Ascending aorta (tissue), 2 donors: ENCODE measurements at regions of chr12 and their contacts with region 1.

Region 1: GRCh38 chr12:109462710-109463692 is 14.1 kb downstream of the KCTD10 start:
- DNase-seq: peak; percentile 60 to 95
- H3K4me3 ChIP-seq: peak overlapping the region; percentile 44 to 50
- H3K27ac ChIP-seq: peak overlapping the region; percentile 96 to 99
- H3K4me1 ChIP-seq: peaks cover 68 to 94% of the 10 kb centered on the region in 2 donors
- H3K27me3 ChIP-seq: no peaks in the 10 kb centered on the region
- CTCF ChIP-seq: no peak

Region 2: DNA sequence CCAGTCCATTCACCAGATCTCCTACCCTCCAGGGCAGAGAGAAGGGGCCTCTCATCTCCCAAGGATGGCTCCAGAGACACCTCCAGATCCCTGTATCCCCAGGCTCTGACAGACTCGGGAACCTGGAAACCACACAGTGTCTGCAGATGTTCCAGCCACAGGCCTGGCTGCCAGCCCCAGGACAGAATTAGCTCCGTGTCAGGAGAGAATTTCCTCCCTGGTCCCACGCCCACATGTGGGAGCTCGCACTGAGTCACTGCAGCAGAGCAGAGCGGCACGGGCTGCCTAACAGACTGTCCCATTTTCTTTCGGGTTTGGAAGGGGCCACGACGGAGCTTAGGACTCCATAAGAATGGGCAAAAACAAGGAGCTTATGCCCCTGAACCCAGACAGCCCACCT is 1157.5 kb before region 1 on chr12:
- intact Hi-C with region 1: loop called (anchors 10 kb)
- DNase-seq: peak; percentile 80 to 96
- H3K4me3 ChIP-seq: peak overlapping the region; percentile 39 to 48
- H3K27ac ChIP-seq: peak overlapping the region; percentile 90 to 91
- H3K4me1 ChIP-seq: peaks cover 31 to 64% of the 10 kb centered on the region in 2 donors
- H3K27me3 ChIP-seq: no peaks in the 10 kb centered on the region
- CTCF ChIP-seq: no peak

Region 3: DNA sequence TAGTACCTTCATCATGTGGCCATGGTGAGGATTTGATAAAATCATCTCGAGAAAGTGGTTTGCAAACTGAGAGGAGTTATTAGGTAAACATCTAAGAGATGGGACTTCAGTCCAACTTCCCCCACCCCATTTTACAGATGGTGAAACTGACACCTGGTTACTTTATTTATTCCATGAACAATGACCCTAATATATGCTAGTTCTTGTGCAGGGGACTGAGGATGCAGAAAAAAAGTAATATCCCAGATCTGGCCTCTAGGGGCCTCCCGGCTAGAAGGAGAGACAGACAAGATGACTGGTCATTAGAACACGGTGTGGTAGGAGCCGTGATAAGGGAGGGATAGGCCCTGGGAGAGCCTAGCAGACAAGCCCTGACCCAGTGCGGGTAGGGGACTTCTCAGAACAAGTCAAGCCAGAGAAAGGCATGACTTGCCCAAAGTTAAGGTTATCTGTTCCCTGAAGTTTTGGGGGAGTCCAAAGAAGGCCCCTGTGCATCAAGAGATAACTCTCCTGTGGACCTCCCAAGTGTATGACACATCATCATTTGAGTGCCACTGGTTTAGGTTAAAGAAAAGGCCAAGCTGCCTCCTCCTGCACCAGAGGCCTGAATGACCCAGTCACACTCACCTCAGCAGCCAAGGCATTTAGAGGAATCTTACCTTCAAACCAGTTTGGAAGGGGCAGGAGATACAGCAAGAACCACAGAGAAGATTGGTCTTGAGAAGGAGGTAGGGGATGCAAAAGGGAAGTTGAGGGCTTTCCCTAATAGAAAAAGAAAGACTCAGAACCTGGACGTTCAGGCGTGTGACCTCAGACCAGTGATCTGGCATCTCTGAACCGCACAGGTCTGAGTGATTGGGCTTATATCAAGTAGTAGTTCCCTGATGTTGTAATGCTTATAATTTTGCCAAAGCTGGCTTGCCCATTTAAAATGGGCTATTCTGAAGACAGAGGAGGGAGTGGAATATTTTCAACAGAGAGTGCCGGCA is 1125.5 kb before region 1 on chr12:
- intact Hi-C with region 1: loop called (anchors 10 kb)
- DNase-seq: peak in 1 of 2 donors; percentile 73
- H3K4me3 ChIP-seq: peak overlapping the region; percentile 48 to 59
- H3K27ac ChIP-seq: peak overlapping the region; percentile 88 to 96
- H3K4me1 ChIP-seq: peaks cover 21 to 63% of the 10 kb centered on the region in 2 donors
- H3K27me3 ChIP-seq: no peaks in the 10 kb centered on the region
- CTCF ChIP-seq: peak; percentile 44 to 61 (median 51)

Region 4: GRCh38 chr12:108838194-108839017 is 624.6 kb before region 1 on chr12:
- intact Hi-C with region 1: loop called (anchors 5 kb)
- DNase-seq: peak; percentile 95 to 98
- H3K4me3 ChIP-seq: no peak overlapping the region
- H3K27ac ChIP-seq: peak overlapping the region; percentile 96 to 97
- H3K4me1 ChIP-seq: peaks cover 40 to 62% of the 10 kb centered on the region in 2 donors
- H3K27me3 ChIP-seq: no peaks in the 10 kb centered on the region
- CTCF ChIP-seq: no peak

Region 5: GRCh38 chr12:109093022-109093918 is 369.7 kb before region 1 on chr12 and contains the start of gene ALKBH2:
- intact Hi-C with region 1: loop called (anchors 10 kb)
- DNase-seq: peak; percentile 66 to 97
- H3K4me3 ChIP-seq: peak within 1 kb of the TSS; percentile 52 to 66
- H3K27ac ChIP-seq: peak within 1 kb of the TSS; percentile 54 to 58
- H3K4me1 ChIP-seq: peaks cover 8 to 26% of the 10 kb centered on the region in 2 donors
- H3K27me3 ChIP-seq: no peaks in the 10 kb centered on the region
- CTCF ChIP-seq: peak; percentile 93 to 99 (median 97)
- total RNA-seq, gene ALKBH2: 18.6 TPM

Region 6: DNA sequence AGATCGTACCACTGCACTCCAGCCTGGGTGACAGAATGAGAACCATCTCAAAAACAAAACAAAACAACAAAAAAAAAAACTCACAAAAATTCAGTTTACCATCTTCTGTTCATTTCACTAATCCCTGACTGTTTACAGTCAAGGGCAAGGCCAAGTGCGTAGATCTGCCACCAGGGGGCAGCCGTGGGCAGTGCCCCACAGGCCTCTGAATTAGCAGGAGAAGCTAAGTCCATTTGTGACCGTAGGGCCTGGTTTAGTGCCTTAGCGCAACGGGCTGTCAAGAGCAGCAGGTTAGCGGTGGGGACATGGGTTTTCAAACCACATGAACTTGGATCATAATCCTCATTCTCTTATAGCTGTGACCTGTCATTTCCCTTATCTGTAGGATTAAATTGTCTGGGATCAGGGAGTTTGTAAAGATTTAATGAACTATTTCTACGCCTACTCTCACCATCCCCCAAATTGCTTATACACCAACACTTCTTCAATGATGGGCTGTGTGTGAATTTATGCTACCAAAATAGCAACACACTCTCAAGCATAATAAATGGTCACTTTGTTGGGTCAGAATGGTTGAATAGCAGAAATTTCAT is 34.9 kb before region 1 on chr12:
- intact Hi-C with region 1: loop called (anchors 1 kb)
- DNase-seq: peak; percentile 31 to 91
- H3K4me3 ChIP-seq: no peak overlapping the region
- H3K27ac ChIP-seq: no peak overlapping the region
- H3K4me1 ChIP-seq: peaks cover 0 to 3% of the 10 kb centered on the region in 2 donors
- H3K27me3 ChIP-seq: no peaks in the 10 kb centered on the region
- CTCF ChIP-seq: peak; percentile 73 to 98 (median 98)

Region 7: GRCh38 chr12:109477185-109477962 is 14.4 kb after region 1 on chr12 and contains the starts of genes KCTD10 and UBE3B:
- intact Hi-C with region 1: loop called (anchors 1 kb)
- DNase-seq: peak; percentile 37 to 93
- H3K4me3 ChIP-seq: peak within 1 kb of the TSS; percentile 75 to 96
- H3K27ac ChIP-seq: peak within 1 kb of the TSS; percentile 94 to 97
- H3K4me1 ChIP-seq: peaks cover 7 to 39% of the 10 kb centered on the region in 2 donors
- H3K27me3 ChIP-seq: no peaks in the 10 kb centered on the region
- CTCF ChIP-seq: no peak
- total RNA-seq, gene KCTD10: 102 TPM
- total RNA-seq, gene UBE3B: 19.1 TPM